Psoas muscle (tissue), 8 donors: ENCODE measurements at regions of chr4 and their contacts with region 1.

Region 1: DNA sequence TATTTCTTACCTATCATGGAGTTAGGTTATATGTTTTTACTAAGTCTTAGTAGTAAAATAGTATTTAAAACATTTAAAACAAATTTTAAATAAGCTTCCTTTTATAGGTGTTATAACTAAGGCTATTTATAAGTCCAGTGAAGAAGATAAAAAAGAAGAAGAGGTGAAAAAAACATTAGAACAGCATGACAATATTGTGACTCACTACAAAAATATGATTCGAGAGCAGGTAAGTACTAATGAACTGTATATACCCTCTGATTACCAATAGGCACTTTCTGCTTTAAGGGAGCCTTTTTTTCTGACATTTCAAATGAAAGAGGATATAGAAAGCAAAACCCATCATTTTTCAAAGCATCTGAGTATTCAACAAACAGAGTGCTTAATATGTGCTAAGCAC is 76.6 kb downstream of the USO1 start:
- DNase-seq: no peak
- ATAC-seq: no peak
- H3K4me3 ChIP-seq: no peak overlapping the region
- H3K27ac ChIP-seq: no peak overlapping the region
- H3K4me1 ChIP-seq: no peaks in the 10 kb centered on the region
- H3K27me3 ChIP-seq: no peaks in the 10 kb centered on the region
- CTCF ChIP-seq: no peak

Region 2: GRCh38 chr4:75950213-75950815 is 149.3 kb after region 1 on chr4:
- intact Hi-C with region 1: loop called (anchors 5 kb)
- DNase-seq: no peak
- ATAC-seq: no peak
- H3K4me3 ChIP-seq: no peak overlapping the region
- H3K27ac ChIP-seq: no peak overlapping the region
- H3K4me1 ChIP-seq: no peaks in the 10 kb centered on the region
- H3K27me3 ChIP-seq: no peaks in the 10 kb centered on the region
- CTCF ChIP-seq: no peak

Region 3: GRCh38 chr4:75973766-75974165 is 172.8 kb after region 1 on chr4:
- intact Hi-C with region 1: loop called in 1 of 2 experiments (anchors 5 kb)
- DNase-seq: no peak
- ATAC-seq: no peak
- H3K4me3 ChIP-seq: no peak overlapping the region
- H3K27ac ChIP-seq: no peak overlapping the region
- H3K4me1 ChIP-seq: no peaks in the 10 kb centered on the region
- H3K27me3 ChIP-seq: no peaks in the 10 kb centered on the region
- CTCF ChIP-seq: no peak